CD14-positive monocyte (primary cell): ENCODE measurements at regions of chr5 and their contacts with region 1.

Region 1: DNA sequence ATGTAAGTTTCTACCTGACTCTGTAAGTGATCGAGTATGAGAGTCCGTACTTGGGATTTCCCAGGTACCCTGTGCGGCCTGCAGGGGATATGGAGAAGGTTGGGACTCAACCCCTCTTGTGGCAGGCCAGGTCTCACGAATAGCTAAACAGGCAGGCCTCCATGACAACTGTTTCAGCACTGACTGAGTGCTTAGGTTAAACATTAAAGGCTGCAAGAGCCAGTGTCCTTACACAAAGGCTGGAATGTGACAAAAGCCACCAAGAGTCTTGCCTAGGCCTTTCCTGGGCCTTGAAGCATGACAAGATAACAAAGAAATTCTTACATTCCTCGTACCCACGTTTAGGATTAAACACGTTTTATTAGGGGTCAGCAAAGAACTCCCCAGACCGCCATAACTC is 58.6 kb downstream of the THBS4 start:
- DNase-seq: no peak
- H3K4me3 ChIP-seq: no peak overlapping the region
- H3K4me3 Mint-ChIP-seq: no peak overlapping the region
- H3K27ac ChIP-seq: no peak overlapping the region
- H3K27ac Mint-ChIP-seq: no peak overlapping the region
- H3K4me1 ChIP-seq: peaks cover 7 to 11% of the 10 kb centered on the region in 2 donors
- H3K4me1 Mint-ChIP-seq: peaks cover 8% of the 10 kb centered on the region
- H3K27me3 ChIP-seq: no peaks in the 10 kb centered on the region
- H3K27me3 Mint-ChIP-seq: peaks cover 0 to 2% (median 0%) of the 10 kb centered on the region in 3 donors
- CTCF ChIP-seq: no peak

Region 2: DNA sequence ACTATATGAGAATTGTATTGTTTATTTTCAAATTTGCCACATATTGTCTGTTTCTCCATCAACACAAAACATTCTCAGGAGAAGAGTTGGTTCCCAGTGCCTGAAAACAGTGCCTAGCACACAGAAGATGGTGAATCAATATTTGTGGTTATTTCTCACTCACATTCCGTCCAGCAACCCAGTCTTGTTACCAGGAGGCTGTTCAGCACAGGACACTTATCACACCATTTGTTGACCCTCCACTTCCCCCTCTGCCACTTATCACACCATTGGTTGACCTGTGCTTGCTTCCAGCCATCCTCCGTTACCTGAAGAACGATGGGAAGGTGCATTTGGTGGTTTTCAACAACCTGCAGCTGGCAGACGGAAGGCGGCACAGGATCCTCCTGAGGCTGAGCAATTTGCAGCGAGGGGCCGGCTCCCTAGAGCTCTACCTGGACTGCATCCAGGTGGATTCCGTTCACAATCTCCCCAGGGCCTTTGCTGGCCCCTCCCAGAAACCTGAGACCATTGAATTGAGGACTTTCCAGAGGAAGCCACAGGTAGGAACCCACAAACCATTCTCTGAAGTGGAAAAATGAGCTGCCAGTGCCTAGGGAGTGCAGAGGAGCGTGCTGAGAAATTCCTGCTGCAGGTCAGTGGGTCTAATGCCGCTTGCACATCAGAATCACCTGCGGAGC is 38.2 kb before region 1 on chr5:
- intact Hi-C with region 1: no loop called
- DNase-seq: no peak
- H3K4me3 ChIP-seq: no peak overlapping the region
- H3K4me3 Mint-ChIP-seq: no peak overlapping the region
- H3K27ac ChIP-seq: no peak overlapping the region
- H3K27ac Mint-ChIP-seq: no peak overlapping the region
- H3K4me1 ChIP-seq: no peaks in the 10 kb centered on the region
- H3K4me1 Mint-ChIP-seq: no peaks in the 10 kb centered on the region
- H3K27me3 ChIP-seq: no peaks in the 10 kb centered on the region
- H3K27me3 Mint-ChIP-seq: no peaks in the 10 kb centered on the region
- CTCF ChIP-seq: no peak

Region 3: GRCh38 chr5:80141147-80141671 is 47.4 kb after region 1 on chr5:
- intact Hi-C with region 1: loop called in 1 of 2 experiments (anchors 10 kb)
- DNase-seq: peak; percentile 74 to 87 (median 83)
- H3K4me3 ChIP-seq: peak overlapping the region in 1 of 3 experiments; percentile 37
- H3K4me3 Mint-ChIP-seq: peak overlapping the region; percentile 43 to 77
- H3K27ac ChIP-seq: peak overlapping the region; percentile 85 to 92
- H3K27ac Mint-ChIP-seq: peak overlapping the region; percentile 89 to 96 (median 94)
- H3K4me1 ChIP-seq: peaks cover 88 to 98% of the 10 kb centered on the region in 2 donors
- H3K4me1 Mint-ChIP-seq: peaks cover 92% of the 10 kb centered on the region
- H3K27me3 ChIP-seq: no peaks in the 10 kb centered on the region
- H3K27me3 Mint-ChIP-seq: no peaks in the 10 kb centered on the region
- CTCF ChIP-seq: no peak

Region 4: GRCh38 chr5:80191991-80192398 is 98.2 kb after region 1 on chr5:
- intact Hi-C with region 1: loop called in 1 of 2 experiments (anchors 5 kb)
- DNase-seq: no peak
- H3K4me3 ChIP-seq: no peak overlapping the region
- H3K4me3 Mint-ChIP-seq: peak overlapping the region in 1 of 2 donors; percentile 28
- H3K27ac ChIP-seq: no peak overlapping the region
- H3K27ac Mint-ChIP-seq: no peak overlapping the region
- H3K4me1 ChIP-seq: peaks cover 22 to 25% of the 10 kb centered on the region in 2 donors
- H3K4me1 Mint-ChIP-seq: peaks cover 38% of the 10 kb centered on the region
- H3K27me3 ChIP-seq: no peaks in the 10 kb centered on the region
- H3K27me3 Mint-ChIP-seq: peaks cover 0 to 2% (median 0%) of the 10 kb centered on the region in 3 donors
- CTCF ChIP-seq: no peak

Region 5: GRCh38 chr5:80308526-80308925 is 214.7 kb after region 1 on chr5:
- intact Hi-C with region 1: loop called (anchors 2 kb)
- DNase-seq: no peak
- H3K4me3 ChIP-seq: no peak overlapping the region
- H3K4me3 Mint-ChIP-seq: no peak overlapping the region
- H3K27ac ChIP-seq: no peak overlapping the region
- H3K27ac Mint-ChIP-seq: peak overlapping the region in 1 of 7 donors; percentile 79
- H3K4me1 ChIP-seq: no peaks in the 10 kb centered on the region
- H3K4me1 Mint-ChIP-seq: no peaks in the 10 kb centered on the region
- H3K27me3 ChIP-seq: no peaks in the 10 kb centered on the region
- H3K27me3 Mint-ChIP-seq: peaks cover 2 to 4% (median 4%) of the 10 kb centered on the region in 3 donors
- CTCF ChIP-seq: no peak

Region 6: GRCh38 chr5:80686757-80687156 is 593.0 kb after region 1 on chr5:
- intact Hi-C with region 1: no loop called
- DNase-seq: no peak
- H3K4me3 ChIP-seq: no peak overlapping the region
- H3K4me3 Mint-ChIP-seq: no peak overlapping the region
- H3K27ac ChIP-seq: no peak overlapping the region
- H3K27ac Mint-ChIP-seq: no peak overlapping the region
- H3K4me1 ChIP-seq: no peaks in the 10 kb centered on the region
- H3K4me1 Mint-ChIP-seq: peaks cover 3% of the 10 kb centered on the region
- H3K27me3 ChIP-seq: no peaks in the 10 kb centered on the region
- H3K27me3 Mint-ChIP-seq: peaks cover 0 to 2% (median 1%) of the 10 kb centered on the region in 3 donors
- CTCF ChIP-seq: peak; percentile 12